PC-9 (cell line): ENCODE measurements at regions of chr16 and their contacts with region 1.

Region 1: DNA sequence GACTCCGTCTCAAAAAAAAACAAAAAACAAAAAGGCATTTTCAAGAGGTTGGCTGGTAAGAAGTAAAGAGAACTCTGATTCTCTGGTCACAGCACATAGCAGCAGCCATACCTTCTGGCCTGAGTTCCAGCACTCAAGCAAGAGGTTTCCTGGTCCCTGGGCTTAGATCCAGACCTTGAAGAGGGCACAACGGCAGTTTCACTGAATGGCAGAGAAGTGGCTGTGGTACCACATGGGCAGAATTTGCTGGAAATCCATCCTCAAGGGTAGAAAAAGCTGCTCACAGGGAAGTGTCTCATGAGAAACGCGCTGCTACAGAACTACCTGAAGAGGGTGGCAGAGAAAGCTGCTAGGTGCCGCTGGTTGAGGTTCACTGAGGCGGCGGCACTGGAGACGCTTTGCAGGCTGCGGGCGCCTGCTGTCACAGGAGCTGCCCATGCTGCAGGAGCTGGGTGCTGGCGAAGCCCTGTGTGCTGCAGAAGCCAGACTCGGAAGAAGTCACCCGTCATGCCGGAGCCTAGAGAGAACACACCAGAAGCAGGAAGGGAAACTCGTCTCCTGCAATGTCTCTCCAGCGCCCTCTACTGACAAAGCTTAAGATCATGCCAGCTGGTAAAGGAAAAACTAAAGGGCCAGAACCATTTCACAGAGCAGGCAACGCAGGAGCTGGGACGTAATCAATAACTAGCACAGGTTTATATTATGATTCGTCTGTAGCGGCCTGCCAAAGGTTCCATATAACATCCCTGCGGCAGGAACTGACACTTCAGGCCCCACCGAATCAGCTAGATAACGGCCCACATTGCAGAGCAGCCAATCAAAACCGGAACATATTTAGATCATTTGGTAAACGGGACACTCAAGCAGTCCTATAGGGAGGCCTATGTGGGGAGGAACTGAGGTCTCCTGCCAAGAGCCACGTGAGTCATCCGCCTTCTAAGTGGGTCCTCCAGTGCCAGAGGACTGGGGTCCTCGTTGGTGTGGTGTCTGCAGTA is 5.4 kb upstream of the ZNF213 start:
- DNase-seq: peak; percentile 55 to 71
- H3K4me3 ChIP-seq: no peak overlapping the region
- H3K27ac ChIP-seq: no peak overlapping the region
- H3K4me1 ChIP-seq: peaks cover 5% of the 10 kb centered on the region; the same call in 1 of the 2 replicates
- H3K27me3 ChIP-seq: no peaks in the 10 kb centered on the region
- CTCF ChIP-seq: peak; percentile 87

Region 2: DNA sequence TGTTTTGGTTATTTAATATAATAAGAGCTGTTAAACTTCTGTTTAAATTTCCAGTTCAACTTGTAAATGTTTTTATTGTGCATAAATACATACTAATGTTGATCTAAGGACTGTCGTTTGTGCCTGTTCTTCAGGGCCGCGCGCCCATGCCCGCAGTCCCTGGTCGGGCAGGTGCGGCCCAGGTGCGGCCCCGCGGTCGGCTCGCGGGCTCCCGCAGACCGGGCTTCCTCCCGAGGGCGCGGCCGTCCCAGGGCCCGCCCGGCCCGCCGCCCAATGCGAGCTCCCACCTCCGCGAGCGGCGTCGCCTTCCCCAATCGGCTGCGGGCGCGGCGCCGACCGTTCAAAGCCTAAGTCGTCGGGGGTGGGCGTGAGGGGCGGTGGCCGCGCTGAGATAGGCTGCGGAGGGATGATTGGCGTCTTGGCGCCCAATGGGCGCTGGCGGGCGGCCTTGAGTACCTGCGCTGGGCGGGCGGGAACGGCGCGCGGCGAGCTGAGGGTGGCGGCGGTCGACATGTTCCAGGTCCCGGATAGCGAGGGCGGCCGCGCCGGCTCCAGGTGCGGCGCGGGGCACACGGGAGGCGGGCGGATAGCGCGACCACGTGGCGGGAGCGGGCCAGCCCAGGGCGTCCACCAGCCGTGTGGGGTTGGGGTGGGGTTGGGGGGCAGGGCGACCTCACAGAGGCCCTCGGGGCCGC is 1451.5 kb before region 1 on chr16 and contains the start of gene JPT2:
- CTCF ChIA-PET with region 1: no interaction called
- POLR2A ChIA-PET with region 1: no interaction called
- intact Hi-C with region 1: no loop called
- DNase-seq: peak; percentile 90 to 99
- H3K4me3 ChIP-seq: peak within 1 kb of the TSS; percentile 98
- H3K27ac ChIP-seq: peak within 1 kb of the TSS; percentile 82
- H3K4me1 ChIP-seq: peaks cover 27% of the 10 kb centered on the region
- H3K27me3 ChIP-seq: no peaks in the 10 kb centered on the region
- CTCF ChIP-seq: no peak
- total RNA-seq, gene JPT2: 199 and 244 TPM in 2 replicates

Region 3: GRCh38 chr16:2926650-2927646 is 202.5 kb before region 1 on chr16:
- CTCF ChIA-PET with region 1: no interaction called
- POLR2A ChIA-PET with region 1: no interaction called
- intact Hi-C with region 1: no loop called
- DNase-seq: peak; percentile 70 to 84
- H3K4me3 ChIP-seq: no peak overlapping the region
- H3K27ac ChIP-seq: no peak overlapping the region
- H3K4me1 ChIP-seq: no peaks in the 10 kb centered on the region
- H3K27me3 ChIP-seq: no peaks in the 10 kb centered on the region
- CTCF ChIP-seq: peak; percentile 96

Region 4: DNA sequence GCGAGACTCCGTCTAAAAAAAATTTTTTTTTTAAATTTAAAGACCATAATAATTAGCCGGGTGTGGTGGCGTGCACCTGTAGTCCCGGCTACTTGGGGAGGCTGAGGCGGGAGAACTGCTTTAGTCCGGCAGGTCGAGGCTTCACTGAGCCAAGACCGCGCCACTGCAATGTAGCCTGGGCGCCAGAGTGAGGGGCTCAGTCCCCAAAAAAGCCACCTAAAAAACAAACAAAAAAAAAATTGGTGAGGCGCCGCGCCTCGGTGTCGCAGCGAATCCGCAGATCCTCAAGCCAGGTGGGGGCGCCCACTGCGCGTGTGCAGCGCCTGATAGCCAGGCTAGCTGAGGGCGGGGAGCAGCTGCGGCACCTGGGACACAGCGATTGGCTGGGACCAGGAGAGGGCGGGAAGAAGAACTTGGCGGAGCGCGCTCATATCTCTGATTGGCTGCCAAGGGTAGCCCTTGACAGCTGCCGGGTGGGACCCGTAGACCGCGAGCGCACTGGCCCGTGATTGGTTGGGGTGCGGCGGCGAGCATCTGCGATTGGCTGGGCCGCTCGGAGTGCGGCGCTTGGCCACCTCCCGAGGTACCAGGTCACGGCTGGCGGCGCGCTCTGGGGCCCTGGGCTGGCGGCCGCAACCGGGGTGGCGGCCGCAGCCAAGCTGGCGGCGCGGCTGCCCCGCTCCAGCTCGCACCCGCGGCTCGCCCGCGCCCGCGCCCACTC is 125.7 kb before region 1 on chr16:
- CTCF ChIA-PET with region 1: interaction called, 3 read pairs
- POLR2A ChIA-PET with region 1: no interaction called
- intact Hi-C with region 1: loop called (anchors 1 kb)
- DNase-seq: peak; percentile 96 to 100
- H3K4me3 ChIP-seq: no peak overlapping the region; the same call in 1 of the 2 replicates
- H3K27ac ChIP-seq: no peak overlapping the region
- H3K4me1 ChIP-seq: peaks cover 33% of the 10 kb centered on the region
- H3K27me3 ChIP-seq: no peaks in the 10 kb centered on the region
- CTCF ChIP-seq: peak; percentile 61

Region 5: DNA sequence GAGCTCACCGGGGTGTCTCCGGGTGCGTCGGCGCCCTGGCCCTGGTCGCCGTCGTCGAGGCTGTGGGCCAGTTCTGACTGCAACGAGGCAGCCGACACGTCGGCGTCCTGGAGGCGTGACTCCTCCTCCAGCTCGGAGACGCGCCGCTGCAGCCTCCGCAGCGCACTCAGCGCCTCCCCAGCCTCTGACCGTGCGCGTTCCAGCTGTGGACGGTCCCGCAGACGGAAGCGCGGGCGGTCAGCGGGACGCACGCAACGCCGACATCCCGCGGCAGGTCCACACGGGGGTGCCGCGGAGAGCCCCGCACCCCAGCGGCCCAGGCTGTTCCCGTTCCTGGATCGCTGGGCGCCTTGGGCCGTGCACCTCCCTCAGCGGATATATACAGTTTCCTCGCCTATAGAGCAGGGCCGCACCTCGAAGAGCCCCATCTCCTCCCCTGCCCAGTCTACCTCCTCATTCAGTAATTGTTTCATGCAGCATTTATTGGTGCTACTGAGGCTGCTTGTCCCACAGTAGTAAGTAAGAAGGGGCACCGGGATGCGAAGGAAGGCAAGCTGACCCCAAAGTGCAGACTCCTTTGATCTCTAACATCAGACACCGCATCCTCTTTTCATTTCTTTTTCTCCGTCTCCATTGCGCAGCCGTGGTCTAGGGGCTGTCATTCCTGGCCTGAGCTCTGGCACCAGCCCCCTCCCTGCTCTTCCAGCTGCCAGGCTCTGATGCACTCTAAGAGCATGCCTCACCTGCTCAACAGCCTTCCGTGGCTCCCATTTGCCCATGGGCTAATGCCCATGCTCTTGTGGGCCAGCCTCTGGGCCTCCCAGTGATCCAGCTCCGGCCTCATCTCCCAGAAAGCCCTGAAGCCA is 99.7 kb before region 1 on chr16:
- CTCF ChIA-PET with region 1: interaction called, 16 read pairs
- POLR2A ChIA-PET with region 1: interaction called, 14 read pairs
- intact Hi-C with region 1: no loop called
- DNase-seq: no peak
- H3K4me3 ChIP-seq: no peak overlapping the region
- H3K27ac ChIP-seq: no peak overlapping the region
- H3K4me1 ChIP-seq: peaks cover 30% of the 10 kb centered on the region
- H3K27me3 ChIP-seq: no peaks in the 10 kb centered on the region
- CTCF ChIP-seq: no peak

Region 6: DNA sequence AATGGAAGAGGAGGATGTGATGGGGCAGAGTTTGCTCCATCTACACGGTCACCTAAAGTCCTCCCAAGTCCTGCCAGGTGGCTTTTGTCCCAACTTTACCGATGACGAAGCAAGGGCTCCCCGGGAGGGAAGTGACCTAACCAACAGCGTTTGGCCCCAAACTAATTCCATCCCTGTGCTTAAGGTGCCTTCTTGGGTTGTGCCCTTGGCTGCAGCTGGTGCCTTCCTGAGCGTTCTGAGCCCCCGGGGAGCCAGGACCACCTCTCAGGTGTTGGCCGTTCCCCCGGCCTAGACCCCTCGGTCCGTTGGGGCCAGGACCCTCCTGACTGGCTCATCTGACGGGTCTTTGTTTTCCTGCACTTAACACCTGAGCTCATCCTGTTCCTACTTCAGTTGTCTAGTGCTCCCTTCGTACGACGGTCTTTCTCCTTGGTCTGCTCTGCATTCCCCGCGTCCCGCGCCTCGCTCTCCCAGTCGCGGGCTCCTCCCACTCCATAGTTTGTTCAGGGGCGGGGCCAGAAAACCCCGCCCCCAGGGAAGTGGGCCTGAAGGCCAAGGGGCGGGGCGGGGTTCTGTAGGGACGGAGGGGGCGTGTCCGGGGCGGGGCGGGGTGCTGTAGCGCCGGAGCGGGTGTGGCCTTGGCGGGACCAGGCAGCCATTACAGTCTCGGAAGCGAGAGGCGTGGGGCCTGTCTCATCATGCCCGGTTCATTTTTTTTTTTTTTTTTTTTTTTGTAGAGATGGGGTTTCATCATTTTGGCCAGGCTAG is 29.5 kb before region 1 on chr16:
- CTCF ChIA-PET with region 1: interaction called, 38 read pairs
- POLR2A ChIA-PET with region 1: no interaction called
- intact Hi-C with region 1: no loop called
- DNase-seq: peak; percentile 70 to 96
- H3K4me3 ChIP-seq: peak overlapping the region; percentile 32; the same call in 1 of the 2 replicates
- H3K27ac ChIP-seq: no peak overlapping the region
- H3K4me1 ChIP-seq: peaks cover 5% of the 10 kb centered on the region; the same call in 1 of the 2 replicates
- H3K27me3 ChIP-seq: no peaks in the 10 kb centered on the region
- CTCF ChIP-seq: no peak

Region 7: DNA sequence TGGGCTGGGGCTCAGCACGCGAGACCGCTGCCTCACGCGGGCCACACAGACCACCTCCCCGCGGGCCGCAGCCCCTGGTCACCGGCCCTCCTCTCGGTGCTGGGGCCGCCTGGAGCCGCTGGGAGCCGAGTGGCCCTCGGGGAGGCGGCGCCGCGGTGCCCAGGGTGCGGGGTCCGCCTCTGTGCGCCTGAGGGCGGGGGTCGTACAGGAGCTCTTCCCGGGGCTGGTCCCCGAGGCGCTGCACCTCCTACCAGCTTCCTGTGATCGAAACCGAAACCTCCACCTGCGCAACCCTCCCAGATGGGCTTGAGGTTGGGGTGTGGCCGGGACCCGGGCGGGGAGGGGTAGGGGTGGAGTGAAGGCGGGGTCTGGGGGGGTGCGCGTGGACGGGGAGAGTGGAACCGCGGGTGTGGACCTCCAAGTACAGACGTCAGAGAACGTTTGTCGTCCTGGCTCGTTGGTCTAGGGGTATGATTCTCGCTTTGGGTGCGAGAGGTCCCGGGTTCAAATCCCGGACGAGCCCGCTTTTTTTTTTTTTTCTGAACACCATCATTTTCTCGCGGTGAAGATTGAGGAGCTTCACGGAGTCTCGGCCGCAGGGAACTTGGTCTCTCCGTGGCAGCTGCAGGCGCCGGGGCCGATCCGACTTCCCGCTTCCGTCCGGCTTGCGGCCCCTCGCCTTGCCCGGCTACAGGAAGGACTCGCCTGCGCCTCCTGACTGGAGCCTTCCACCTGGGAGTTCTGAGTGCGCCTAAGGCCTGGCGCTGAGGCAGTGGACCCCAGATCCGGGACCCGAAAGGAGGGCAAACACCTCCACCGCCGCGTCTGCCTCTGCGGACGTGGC is 29.3 kb after region 1 on chr16:
- CTCF ChIA-PET with region 1: no interaction called
- POLR2A ChIA-PET with region 1: interaction called, 10 read pairs
- intact Hi-C with region 1: no loop called
- DNase-seq: peak; percentile 82 to 95
- H3K4me3 ChIP-seq: peak overlapping the region; percentile 71
- H3K27ac ChIP-seq: peak overlapping the region; percentile 98
- H3K4me1 ChIP-seq: no peaks in the 10 kb centered on the region
- H3K27me3 ChIP-seq: no peaks in the 10 kb centered on the region
- CTCF ChIP-seq: no peak

Region 8: DNA sequence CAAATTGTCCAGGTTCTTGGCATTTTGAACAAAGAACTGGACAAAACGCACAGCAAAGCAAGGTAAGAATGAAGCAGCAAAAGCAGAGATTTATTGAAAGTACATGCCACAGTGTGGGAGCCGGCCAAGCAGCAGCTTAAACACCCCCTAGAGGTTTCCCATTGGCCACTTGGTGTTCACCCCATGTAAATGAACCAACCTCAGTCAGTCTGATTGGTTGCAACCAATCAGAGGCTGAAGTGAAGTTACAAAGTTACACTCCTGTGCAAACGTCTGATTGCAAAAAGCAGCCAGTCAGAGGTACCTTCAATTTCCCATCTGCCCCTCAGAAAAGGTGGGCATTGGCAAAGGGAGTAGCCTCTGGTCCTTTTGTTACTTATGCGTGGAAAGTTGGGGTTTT is 145.1 kb after region 1 on chr16:
- CTCF ChIA-PET with region 1: no interaction called
- POLR2A ChIA-PET with region 1: interaction called, 10 read pairs
- intact Hi-C with region 1: no loop called
- DNase-seq: peak in 1 of 2 experiments; percentile 37
- H3K4me3 ChIP-seq: no peak overlapping the region
- H3K27ac ChIP-seq: no peak overlapping the region
- H3K4me1 ChIP-seq: no peaks in the 10 kb centered on the region
- H3K27me3 ChIP-seq: no peaks in the 10 kb centered on the region; the same call in 1 of the 2 replicates
- CTCF ChIP-seq: no peak